Vagina (tissue), 2 donors: ENCODE measurements at regions of chr1 and their contacts with region 1.

Region 1: GRCh38 chr1:150168960-150169601 is 19.4 kb downstream of the PLEKHO1 start:
- DNase-seq: no peak
- H3K4me3 ChIP-seq: no peak overlapping the region
- H3K27ac ChIP-seq: no peak overlapping the region
- H3K4me1 ChIP-seq: no peaks in the 10 kb centered on the region
- H3K27me3 ChIP-seq: no peaks in the 10 kb centered on the region
- CTCF ChIP-seq: peak; percentile 57 to 70 (median 67)
- POLR2A ChIP-seq: no peak

Region 2: GRCh38 chr1:149915429-149916192 is 253.5 kb before region 1 on chr1:
- intact Hi-C with region 1: no loop called
- DNase-seq: no peak
- H3K4me3 ChIP-seq: no peak overlapping the region
- H3K27ac ChIP-seq: no peak overlapping the region
- H3K4me1 ChIP-seq: peaks cover 27% of the 10 kb centered on the region
- H3K27me3 ChIP-seq: no peaks in the 10 kb centered on the region
- CTCF ChIP-seq: no peak
- POLR2A ChIP-seq: no peak

Region 3: DNA sequence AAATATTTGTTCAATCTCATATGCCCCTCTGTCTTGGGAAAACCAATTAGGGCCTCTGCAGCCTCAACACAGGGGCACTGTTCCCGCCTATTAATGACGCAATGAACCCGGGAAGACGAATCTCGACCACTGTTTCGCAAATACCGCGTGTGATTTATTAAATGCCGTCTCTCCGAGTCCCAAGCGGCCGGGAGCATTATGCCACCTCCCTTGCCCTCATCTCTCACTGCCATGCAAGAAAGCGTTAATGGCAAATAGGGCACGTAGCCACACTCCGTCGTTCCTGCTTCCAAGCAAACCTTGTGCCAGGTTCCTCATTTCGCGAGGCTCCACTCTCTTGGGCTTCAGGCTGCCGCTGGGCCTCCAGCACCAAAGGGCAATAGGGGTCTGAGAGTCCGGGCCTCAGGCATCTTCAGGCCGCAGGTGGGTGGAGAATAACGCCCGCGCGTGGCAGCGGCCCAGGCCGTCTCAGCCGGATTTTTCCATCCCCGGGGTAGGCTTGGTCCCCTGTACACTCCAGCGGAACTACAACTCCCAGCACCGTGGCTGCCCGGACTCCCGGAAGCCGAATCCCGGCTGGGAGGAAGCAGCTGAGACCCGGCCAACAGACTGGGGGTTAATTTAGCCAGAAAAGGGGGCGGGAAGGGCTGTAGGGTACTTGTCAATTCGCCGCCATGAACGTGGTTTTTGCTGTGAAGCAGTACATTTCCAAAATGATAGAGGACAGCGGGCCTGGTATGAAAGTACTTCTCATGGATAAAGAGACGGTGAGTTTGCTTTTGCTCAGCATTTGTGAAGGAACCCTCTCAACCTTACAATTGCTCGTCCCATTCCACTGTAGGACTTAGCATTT is 101.7 kb before region 1 on chr1 and contains the start of gene VPS45:
- intact Hi-C with region 1: loop called (anchors 5 kb)
- DNase-seq: peak; percentile 94 to 96
- H3K4me3 ChIP-seq: peak within 1 kb of the TSS; percentile 67 to 87
- H3K27ac ChIP-seq: peak within 1 kb of the TSS; percentile 98
- H3K4me1 ChIP-seq: peaks cover 24% of the 10 kb centered on the region
- H3K27me3 ChIP-seq: no peaks in the 10 kb centered on the region
- CTCF ChIP-seq: peak in 1 of 3 experiments; percentile 28
- POLR2A ChIP-seq: peak in 1 of 2 donors; percentile 0
- total RNA-seq, gene VPS45: 32.2 TPM